AG04450 (cell line): ENCODE measurements at regions of chr4 and their contacts with region 1.

Region 1: GRCh38 chr4:77095101-77095821 is 19.5 kb upstream of the CCNI start:
- DNase-seq: peak; percentile 21
- H3K4me3 ChIP-seq: no peak overlapping the region
- H3K27ac ChIP-seq: no peak overlapping the region
- H3K27me3 ChIP-seq: no peaks in the 10 kb centered on the region
- CTCF ChIP-seq: peak; percentile 90

Region 2: DNA sequence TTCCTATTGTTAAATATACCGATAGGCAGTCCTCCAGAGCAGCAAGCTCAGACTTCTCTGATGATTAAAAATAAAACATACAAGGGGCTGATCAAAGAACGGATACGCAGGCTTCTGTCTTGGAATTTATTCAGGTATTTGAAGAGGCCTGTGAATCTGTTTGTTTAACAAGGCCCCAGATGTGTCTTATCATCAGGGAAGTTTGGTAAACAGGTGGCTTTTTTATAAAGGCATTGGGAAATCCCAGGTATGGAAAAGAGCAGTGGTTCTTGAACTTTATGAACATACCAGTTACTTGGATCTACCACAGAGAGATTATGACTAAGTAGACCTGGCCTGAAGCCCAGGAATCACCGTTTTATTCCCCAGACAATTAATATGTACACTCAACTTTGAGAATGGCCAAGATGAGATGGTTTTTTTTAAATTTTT is 245.2 kb before region 1 on chr4:
- CTCF ChIA-PET with region 1: no interaction called
- POLR2A ChIA-PET with region 1: no interaction called
- DNase-seq: peak; percentile 79
- H3K4me3 ChIP-seq: no peak overlapping the region
- H3K27ac ChIP-seq: no peak overlapping the region
- H3K27me3 ChIP-seq: peaks cover 3% of the 10 kb centered on the region
- CTCF ChIP-seq: no peak

Region 3: DNA sequence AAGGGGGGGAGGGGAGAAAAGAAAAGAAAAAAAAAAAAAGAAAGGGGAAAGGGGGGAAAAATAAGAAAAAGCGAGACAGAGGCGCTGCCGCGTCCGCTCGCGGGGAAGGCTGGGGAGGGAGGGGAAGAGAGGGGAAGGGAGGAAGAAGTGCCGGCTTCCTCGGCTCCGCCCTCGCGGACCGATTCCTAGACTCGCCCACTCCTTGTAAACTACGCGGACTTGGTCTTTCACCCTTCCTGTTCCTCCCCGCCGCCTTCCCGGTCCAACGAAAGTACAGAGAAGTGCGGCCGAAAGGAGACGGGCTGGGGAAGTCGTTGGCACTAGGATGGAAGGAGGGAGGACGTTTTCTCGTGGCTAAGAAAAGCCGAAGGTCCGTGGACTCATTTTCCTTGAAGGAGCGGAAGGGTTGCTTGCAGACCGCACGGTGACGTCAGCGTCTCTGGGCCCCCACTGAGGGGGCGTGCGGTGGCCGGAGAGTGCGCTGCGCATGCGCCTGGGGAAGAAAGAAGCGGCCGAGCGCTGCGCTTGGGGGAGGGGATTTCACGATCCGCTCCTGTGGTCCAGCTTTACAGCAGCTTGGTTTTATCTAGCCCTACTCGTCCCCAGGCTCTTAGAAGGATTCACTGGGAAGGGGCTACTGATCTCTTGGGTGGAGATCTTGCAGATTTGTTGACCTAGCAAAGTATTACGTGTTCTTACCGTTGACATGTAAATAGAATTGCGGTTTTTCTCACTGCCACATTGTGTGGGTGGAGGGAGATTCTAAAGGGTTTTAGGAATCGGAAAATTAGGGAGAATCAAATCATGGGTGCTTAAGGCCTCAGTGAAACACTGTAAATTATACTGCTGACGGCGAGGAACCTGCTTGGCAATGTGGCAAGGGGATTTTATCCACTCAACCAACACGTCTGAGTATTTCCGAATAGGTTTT is 19.1 kb before region 1 on chr4 and contains the start of gene CCNI:
- CTCF ChIA-PET with region 1: interaction called, 36 read pairs
- POLR2A ChIA-PET with region 1: interaction called, 3 read pairs
- DNase-seq: peak; percentile 96
- H3K4me3 ChIP-seq: peak within 1 kb of the TSS; percentile 82
- H3K27ac ChIP-seq: peak within 1 kb of the TSS; percentile 100
- H3K27me3 ChIP-seq: no peaks in the 10 kb centered on the region
- CTCF ChIP-seq: no peak
- polyA plus RNA-seq, gene CCNI: 178 and 226 TPM in 2 replicates

Region 4: DNA sequence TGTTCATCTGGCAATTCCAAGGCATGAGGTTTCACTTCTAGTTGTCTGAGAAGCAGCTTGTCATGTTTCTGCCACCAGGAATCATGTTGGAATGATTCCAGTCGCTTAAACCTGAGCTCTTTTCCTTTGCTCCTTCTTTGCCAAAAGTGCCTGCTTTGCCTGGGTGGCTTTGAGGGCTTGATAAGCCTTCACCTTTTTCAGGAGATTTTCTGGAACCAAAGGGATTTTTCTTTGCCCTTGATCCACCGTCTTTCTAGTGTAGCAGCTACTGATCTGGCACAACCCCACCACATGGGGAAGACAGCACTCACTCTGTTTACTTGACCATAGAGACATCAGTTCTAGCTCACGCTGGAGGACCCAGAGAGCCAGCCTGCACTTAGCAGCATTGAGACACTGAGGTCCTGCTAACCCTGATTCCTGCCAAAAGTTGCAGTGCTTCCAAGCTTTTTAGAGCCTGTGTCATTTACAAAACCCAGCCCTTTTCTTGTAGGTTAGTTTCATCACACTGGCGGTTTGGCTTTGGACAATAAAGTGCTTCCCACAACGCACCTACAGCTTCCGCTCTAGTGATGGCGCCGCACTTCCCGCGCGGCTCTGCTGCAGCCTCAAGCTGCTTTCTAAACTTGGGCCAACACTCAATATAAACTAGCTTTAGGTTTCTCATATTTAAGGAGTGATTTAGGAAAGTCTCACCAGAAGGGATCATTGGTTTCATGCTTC is 12.2 kb before region 1 on chr4:
- CTCF ChIA-PET with region 1: interaction called, 36 read pairs
- POLR2A ChIA-PET with region 1: no interaction called
- DNase-seq: no peak
- H3K4me3 ChIP-seq: no peak overlapping the region
- H3K27ac ChIP-seq: no peak overlapping the region
- H3K27me3 ChIP-seq: no peaks in the 10 kb centered on the region
- CTCF ChIP-seq: no peak

Region 5: GRCh38 chr4:77126809-77127208 is 31.5 kb after region 1 on chr4:
- CTCF ChIA-PET with region 1: interaction called, 22 read pairs
- POLR2A ChIA-PET with region 1: no interaction called
- DNase-seq: no peak
- H3K4me3 ChIP-seq: no peak overlapping the region
- H3K27ac ChIP-seq: no peak overlapping the region
- H3K27me3 ChIP-seq: peaks cover 23% of the 10 kb centered on the region
- CTCF ChIP-seq: no peak

Region 6: DNA sequence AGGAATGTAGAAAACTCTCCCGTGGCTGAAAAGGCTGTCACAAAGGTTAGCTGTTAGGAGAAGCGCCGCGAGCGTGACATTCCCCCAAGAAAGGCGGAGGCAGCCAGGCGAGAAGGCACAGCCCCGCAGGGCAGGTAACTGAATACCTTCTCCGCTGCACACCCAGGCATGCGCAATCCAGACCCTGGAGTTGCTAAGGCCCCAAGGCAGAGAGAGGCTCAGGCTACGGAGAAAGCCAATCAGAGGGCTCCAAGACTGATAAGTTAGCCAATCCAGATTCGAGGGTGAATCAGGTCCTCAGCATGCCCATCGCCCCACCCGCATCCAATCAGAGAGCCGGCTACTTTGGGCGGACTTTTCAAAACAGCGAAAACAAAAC is 61.3 kb after region 1 on chr4:
- CTCF ChIA-PET with region 1: interaction called, 18 read pairs
- POLR2A ChIA-PET with region 1: interaction called, 4 read pairs
- DNase-seq: peak; percentile 99
- H3K4me3 ChIP-seq: peak overlapping the region; percentile 98
- H3K27ac ChIP-seq: peak overlapping the region; percentile 99
- H3K27me3 ChIP-seq: peaks cover 13% of the 10 kb centered on the region
- CTCF ChIP-seq: no peak

Region 7: GRCh38 chr4:77358315-77358928 is 263.2 kb after region 1 on chr4:
- CTCF ChIA-PET with region 1: interaction called, 17 read pairs
- POLR2A ChIA-PET with region 1: no interaction called
- DNase-seq: no peak
- H3K4me3 ChIP-seq: no peak overlapping the region
- H3K27ac ChIP-seq: no peak overlapping the region
- H3K27me3 ChIP-seq: peaks cover 8% of the 10 kb centered on the region
- CTCF ChIP-seq: peak; percentile 72